ENCODE measurements at regions of chr4 and their contacts with region 1.

Region 1: DNA sequence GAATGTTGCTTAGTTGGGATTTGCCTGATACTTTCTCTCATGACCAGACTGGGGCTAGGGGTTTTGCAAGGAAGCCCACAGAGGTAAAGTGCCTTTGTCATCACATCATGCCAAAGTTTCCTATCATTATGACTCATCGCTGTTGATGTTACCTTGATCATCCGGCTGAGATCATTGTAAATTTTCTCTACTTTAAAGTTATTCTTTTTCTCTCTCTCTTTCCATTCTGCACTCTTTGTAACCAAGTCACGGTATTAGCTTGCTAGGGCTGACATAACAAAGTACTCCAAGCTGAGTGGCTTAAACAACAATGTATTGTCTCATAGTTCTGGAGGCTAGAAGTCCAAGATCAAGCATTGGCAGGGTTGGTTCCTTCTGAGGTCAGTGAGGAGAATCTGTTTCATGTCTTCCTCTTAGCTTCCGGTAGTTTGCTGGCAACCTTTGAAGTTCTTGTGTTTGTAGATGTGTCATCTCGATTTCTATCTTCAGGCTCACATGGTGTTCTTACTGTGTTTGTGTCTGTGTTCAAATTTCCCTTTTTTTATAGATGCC is 113.0 kb downstream of the DTHD1 start:
- DNase-seq: peak; percentile 47
- H3K4me3 Mint-ChIP-seq: peak overlapping the region; percentile 69
- H3K27ac Mint-ChIP-seq: peak overlapping the region; percentile 97
- H3K4me1 Mint-ChIP-seq: peaks cover 26% of the 10 kb centered on the region
- H3K27me3 Mint-ChIP-seq: peaks cover 17% of the 10 kb centered on the region

Region 2: GRCh38 chr4:35970366-35970960 is 424.0 kb before region 1 on chr4:
- intact Hi-C with region 1: loop called (anchors 5 kb)
- DNase-seq: no peak
- H3K4me3 Mint-ChIP-seq: no peak overlapping the region
- H3K27ac Mint-ChIP-seq: no peak overlapping the region
- H3K4me1 Mint-ChIP-seq: peaks cover 7% of the 10 kb centered on the region
- H3K27me3 Mint-ChIP-seq: peaks cover 5% of the 10 kb centered on the region

Region 3: GRCh38 chr4:36081185-36081584 is 313.2 kb before region 1 on chr4:
- intact Hi-C with region 1: loop called (anchors 2 kb)
- DNase-seq: no peak
- H3K4me3 Mint-ChIP-seq: no peak overlapping the region
- H3K27ac Mint-ChIP-seq: no peak overlapping the region
- H3K4me1 Mint-ChIP-seq: peaks cover 12% of the 10 kb centered on the region
- H3K27me3 Mint-ChIP-seq: no peaks in the 10 kb centered on the region

Region 4: GRCh38 chr4:36099527-36099926 is 294.9 kb before region 1 on chr4:
- intact Hi-C with region 1: loop called (anchors 5 kb)
- DNase-seq: peak; percentile 30
- H3K4me3 Mint-ChIP-seq: no peak overlapping the region
- H3K27ac Mint-ChIP-seq: peak overlapping the region; percentile 71
- H3K4me1 Mint-ChIP-seq: peaks cover 23% of the 10 kb centered on the region
- H3K27me3 Mint-ChIP-seq: no peaks in the 10 kb centered on the region

Region 5: GRCh38 chr4:36363024-36363423 is 31.4 kb before region 1 on chr4:
- intact Hi-C with region 1: no loop called
- DNase-seq: no peak
- H3K4me3 Mint-ChIP-seq: no peak overlapping the region
- H3K27ac Mint-ChIP-seq: no peak overlapping the region
- H3K4me1 Mint-ChIP-seq: peaks cover 1% of the 10 kb centered on the region
- H3K27me3 Mint-ChIP-seq: peaks cover 4% of the 10 kb centered on the region

Region 6: DNA sequence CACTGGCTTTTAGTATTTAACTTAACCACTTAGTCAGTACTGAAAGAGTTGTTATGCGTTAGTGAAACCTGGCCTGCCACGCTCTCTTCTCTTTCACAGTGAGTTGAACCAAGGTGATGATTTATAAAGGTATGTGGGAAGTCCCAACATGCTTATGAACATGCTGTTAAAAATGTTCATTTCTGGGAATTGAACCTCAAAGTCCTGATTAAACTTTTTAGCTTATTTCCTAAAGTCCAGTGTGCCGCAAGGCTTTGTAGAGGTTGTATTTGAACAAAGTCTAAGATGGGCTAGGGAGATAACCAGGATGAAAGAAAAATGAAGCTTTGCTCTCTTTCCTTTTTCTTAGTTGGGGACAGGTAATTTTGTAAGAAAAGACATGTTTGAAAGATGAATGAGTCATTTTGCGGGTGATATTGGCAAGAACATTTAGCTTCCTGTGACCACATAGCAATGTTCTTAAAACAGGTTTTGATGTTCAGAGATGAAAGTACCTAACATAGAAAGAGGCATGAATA is 157.3 kb after region 1 on chr4:
- intact Hi-C with region 1: loop called (anchors 5 kb)
- DNase-seq: no peak
- H3K4me3 Mint-ChIP-seq: no peak overlapping the region
- H3K27ac Mint-ChIP-seq: peak overlapping the region; percentile 8
- H3K4me1 Mint-ChIP-seq: peaks cover 14% of the 10 kb centered on the region
- H3K27me3 Mint-ChIP-seq: no peaks in the 10 kb centered on the region

Measured in activated T-helper 2 cell treated with anti-CD3 and anti-CD28 coated beads, Interferon-gamma antibody, Interleukin-2, Interleukin-4, amounts not matched to agents 10 μg/mL and 5 μg/mL and 100 μg/mL, durations not matched to agents 14 hours and 24 hours and 36 hours (primary cell).